WTC11 (cell line): ENCODE measurements at regions of chr9 and their contacts with region 1.

Region 1: GRCh38 chr9:93566408-93567270 is 9.7 kb upstream of the PHF2 start:
- DNase-seq: peak; percentile 98
- ATAC-seq: peak; percentile 91
- H3K4me3 Mint-ChIP-seq: peak overlapping the region; percentile 72
- H3K27ac Mint-ChIP-seq: peak overlapping the region; percentile 76
- H3K4me1 Mint-ChIP-seq: peaks cover 8% of the 10 kb centered on the region; the same call in 1 of the 2 replicates
- H3K27me3 Mint-ChIP-seq: peaks cover 7% of the 10 kb centered on the region
- CTCF ChIP-seq: peak; percentile 85

Region 2: GRCh38 chr9:93453047-93453914 is 113.4 kb before region 1 on chr9 and contains the start of gene FAM120AOS:
- CTCF ChIA-PET with region 1: interaction called, 12 read pairs
- POLR2A ChIA-PET with region 1: interaction called, 4 read pairs
- DNase-seq: peak; percentile 82
- ATAC-seq: peak; percentile 82
- H3K4me3 Mint-ChIP-seq: peak within 1 kb of the TSS; percentile 90
- H3K27ac Mint-ChIP-seq: peak within 1 kb of the TSS; percentile 81
- H3K4me1 Mint-ChIP-seq: peaks cover 45% of the 10 kb centered on the region
- H3K27me3 Mint-ChIP-seq: no peaks in the 10 kb centered on the region
- CTCF ChIP-seq: no peak
- total RNA-seq, gene FAM120AOS: 43.7 to 48.1 TPM (median 44.4 TPM) in 3 replicates

Region 3: DNA sequence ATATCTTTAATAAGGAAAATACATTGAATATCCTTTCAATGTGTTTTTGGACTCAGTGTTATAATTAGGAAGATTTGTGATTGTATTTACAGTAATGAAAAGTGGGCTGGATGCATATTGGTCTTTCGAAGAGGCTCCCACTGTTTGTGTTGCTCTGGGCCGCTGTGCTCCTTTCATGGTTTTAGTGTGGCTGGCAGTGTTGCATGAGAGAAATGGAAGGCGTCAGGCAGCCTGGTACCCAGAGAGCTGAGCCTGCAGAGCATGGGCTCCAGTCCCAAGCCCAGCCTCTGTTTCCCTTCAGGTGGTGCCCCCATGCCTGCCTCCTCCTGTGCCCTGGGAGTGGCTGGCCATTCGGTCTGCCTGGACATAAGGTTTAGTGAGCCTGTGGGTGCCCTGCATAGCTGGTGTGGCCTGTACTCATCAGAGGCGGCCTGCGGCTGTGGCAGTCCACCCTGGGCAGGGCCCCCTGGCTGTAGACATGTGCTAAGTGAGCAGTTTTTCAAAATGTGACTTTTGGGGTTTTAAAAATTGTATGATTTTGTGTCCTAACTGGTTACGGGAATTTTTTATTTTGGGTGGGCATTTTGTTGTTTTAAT is 85.8 kb before region 1 on chr9:
- CTCF ChIA-PET with region 1: interaction called, 10 read pairs
- POLR2A ChIA-PET with region 1: no interaction called
- DNase-seq: no peak
- ATAC-seq: peak; percentile 75
- H3K4me3 Mint-ChIP-seq: no peak overlapping the region
- H3K27ac Mint-ChIP-seq: peak overlapping the region; percentile 42
- H3K4me1 Mint-ChIP-seq: peaks cover 30% of the 10 kb centered on the region
- H3K27me3 Mint-ChIP-seq: no peaks in the 10 kb centered on the region
- CTCF ChIP-seq: no peak

Region 4: GRCh38 chr9:93582115-93582514 is 15.5 kb after region 1 on chr9:
- CTCF ChIA-PET with region 1: interaction called, 13 read pairs
- POLR2A ChIA-PET with region 1: interaction called, 5 read pairs
- DNase-seq: no peak
- ATAC-seq: peak; percentile 21
- H3K4me3 Mint-ChIP-seq: no peak overlapping the region
- H3K27ac Mint-ChIP-seq: no peak overlapping the region
- H3K4me1 Mint-ChIP-seq: peaks cover 31% of the 10 kb centered on the region
- H3K27me3 Mint-ChIP-seq: peaks cover 7% of the 10 kb centered on the region
- CTCF ChIP-seq: no peak

Region 5: GRCh38 chr9:93592643-93593021 is 26.0 kb after region 1 on chr9:
- CTCF ChIA-PET with region 1: interaction called, 34 read pairs
- POLR2A ChIA-PET with region 1: no interaction called
- DNase-seq: peak; percentile 59
- ATAC-seq: peak; percentile 93
- H3K4me3 Mint-ChIP-seq: no peak overlapping the region
- H3K27ac Mint-ChIP-seq: peak overlapping the region; percentile 74; the same call in 1 of the 2 replicates
- H3K4me1 Mint-ChIP-seq: peaks cover 39% of the 10 kb centered on the region
- H3K27me3 Mint-ChIP-seq: no peaks in the 10 kb centered on the region
- CTCF ChIP-seq: peak; percentile 20; the same call in 1 of the 2 replicates

Region 6: DNA sequence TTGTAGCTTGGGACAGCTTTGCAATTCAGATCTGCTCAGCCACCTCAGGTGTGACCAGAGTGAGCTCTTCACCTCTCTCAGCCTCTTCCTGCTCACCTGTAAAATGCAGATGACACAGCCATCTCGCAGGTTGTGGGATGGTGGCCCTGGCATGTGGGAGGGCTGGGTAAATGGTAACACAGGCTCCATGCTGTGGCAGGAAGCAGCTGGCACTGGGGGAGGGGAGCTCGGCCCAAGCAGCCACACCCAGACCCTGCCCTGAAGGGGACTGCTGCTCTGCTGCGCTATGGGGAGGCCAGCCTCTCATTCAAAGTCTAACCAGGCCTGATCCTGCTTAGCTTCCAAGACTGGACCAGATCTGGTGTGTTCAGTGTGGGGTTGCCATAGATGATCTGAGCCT is 33.9 kb after region 1 on chr9:
- CTCF ChIA-PET with region 1: interaction called, 14 read pairs
- POLR2A ChIA-PET with region 1: no interaction called
- DNase-seq: no peak
- ATAC-seq: peak; percentile 70
- H3K4me3 Mint-ChIP-seq: no peak overlapping the region
- H3K27ac Mint-ChIP-seq: peak overlapping the region; percentile 73
- H3K4me1 Mint-ChIP-seq: peaks cover 61% of the 10 kb centered on the region
- H3K27me3 Mint-ChIP-seq: no peaks in the 10 kb centered on the region; the same call in 1 of the 2 replicates
- CTCF ChIP-seq: no peak